Posterior vena cava (tissue), 2 donors: ENCODE measurements at regions of chr16 and their contacts with region 1.

Region 1: DNA sequence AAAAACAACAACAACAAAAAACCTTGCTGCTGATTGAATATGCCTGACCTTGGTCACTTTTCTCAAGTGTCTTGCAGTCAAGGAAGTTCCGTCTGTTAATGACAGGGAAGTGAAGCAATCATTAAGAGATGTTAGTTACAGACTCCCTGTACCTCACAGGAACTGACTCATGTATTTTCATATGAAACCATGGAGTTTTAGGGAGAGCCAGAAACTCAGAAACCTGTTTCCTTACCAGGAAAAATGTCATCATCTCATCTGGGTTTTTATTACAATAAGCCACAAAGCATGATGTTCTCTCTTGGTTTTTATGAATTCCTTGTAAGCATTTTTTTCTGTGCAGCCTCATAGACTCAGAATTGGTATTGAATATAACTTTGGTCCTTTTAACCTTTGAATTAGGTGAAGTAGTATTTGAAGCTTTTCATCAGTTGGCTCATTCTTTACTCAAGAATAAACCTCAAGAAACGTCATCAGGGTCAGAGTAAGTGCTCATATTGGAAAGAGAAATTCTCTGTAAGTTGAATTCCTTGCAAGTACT is 10.3 kb downstream of the LYRM1 start:
- DNase-seq: no peak

Region 2: GRCh38 chr16:20791923-20792612 is 118.8 kb before region 1 on chr16:
- intact Hi-C with region 1: no loop called
- DNase-seq: no peak

Region 3: DNA sequence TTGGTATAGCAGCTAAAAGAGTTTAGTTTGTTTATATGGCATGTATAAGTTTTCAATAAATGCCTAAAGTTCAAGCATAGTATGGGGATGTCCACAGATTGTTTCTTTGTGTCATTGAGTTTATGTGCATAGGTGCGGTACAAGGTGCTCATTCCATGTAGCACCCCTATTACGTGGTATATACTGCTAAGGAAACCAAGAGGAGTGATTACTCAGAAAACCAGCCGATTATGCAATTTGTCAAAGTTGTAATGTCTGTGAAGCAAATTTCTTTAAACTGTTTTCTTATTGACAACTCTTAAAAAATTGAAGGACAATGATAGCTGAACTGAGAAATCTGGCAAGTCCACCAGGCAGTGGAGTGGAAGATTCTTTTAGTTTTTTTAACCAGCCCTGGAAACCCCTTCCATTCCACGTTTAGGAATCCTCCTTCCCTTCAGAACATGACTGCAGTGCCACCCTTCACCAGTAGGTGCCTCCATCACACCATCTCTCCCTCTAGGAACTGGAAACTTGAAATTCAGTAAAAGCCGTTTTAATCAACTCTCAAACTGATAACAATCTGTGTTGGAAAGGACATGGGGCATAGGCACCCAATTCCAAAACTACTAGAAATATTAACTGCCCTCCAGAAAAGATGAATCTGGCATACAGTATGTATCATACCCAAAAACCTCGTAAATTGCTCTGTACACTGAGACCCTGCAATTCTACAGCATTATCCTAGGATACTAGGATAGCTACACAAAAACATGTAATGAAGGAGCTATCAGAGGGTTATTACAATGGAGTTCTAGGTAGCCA is 61.1 kb before region 1 on chr16:
- intact Hi-C with region 1: loop called (anchors 5 to 10 kb)
- DNase-seq: peak; percentile 89